ENCODE measurements at regions of chr11 and their contacts with region 1.

Region 1: DNA sequence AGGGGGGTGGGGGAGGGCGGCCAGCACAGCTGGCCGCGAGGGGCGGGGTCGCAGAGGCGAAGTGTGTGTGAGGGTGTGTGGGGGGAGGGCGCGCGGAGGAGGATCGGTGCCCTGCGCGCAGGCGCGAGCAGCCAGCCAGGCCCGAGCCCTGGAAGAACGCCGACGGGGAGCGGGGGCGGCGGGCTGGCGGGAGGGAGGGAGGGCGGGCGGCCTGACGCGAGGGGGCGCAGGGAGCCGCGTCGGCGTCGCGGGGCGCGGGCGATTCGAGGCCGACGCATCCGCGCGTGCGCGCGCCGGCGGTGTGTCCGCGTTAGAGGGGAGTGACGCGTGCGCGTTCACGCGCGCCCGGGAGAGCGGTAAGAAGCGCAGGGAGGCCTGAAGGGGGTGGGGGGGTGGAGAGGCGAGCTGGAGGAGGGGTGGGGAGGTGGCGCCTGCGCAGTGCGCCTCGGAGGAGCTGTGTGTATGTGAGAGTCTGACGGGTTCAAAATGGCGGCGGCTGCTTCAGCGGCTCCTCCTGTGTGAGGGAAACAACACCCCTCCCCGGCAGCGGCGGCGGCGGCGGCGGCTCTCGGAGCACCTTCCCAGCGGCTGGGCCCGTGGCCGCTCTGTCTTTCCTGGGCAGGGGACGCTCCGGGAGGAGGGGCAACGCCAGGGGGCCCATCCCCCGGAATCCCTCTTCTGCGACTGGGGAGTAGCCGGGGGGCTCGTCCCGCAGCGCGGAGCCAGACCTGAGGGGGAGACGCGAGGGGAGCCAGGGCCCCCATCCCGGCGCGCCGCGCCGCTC is at the start of gene KDM2A:
- DNase-seq: peak; percentile 84 to 100 (median 98)
- ATAC-seq: peak; percentile 77 to 82
- H3K4me3 Mint-ChIP-seq: peak within 1 kb of the TSS; percentile 91 to 99 (median 96)
- H3K27ac Mint-ChIP-seq: peak within 1 kb of the TSS; percentile 82 to 97 (median 96)
- H3K4me1 Mint-ChIP-seq: peaks cover 21 to 55% (median 40%) of the 10 kb centered on the region in 4 donors
- H3K27me3 Mint-ChIP-seq: no peaks in the 10 kb centered on the region
- polyA plus RNA-seq, gene KDM2A: 8.0 to 12.9 (median 9.9) TPM

Region 2: GRCh38 chr11:66649903-66650302 is 469.1 kb before region 1 on chr11:
- POLR2A ChIA-PET with region 1: no interaction called
- DNase-seq: no peak
- ATAC-seq: no peak
- H3K4me3 Mint-ChIP-seq: peak overlapping the region in 3 of 10 donors; percentile 15 to 36 (median 30)
- H3K27ac Mint-ChIP-seq: peak overlapping the region in 3 of 10 donors; percentile 48 to 78 (median 73)
- H3K4me1 Mint-ChIP-seq: peaks cover 30 to 78% (median 69%) of the 10 kb centered on the region in 4 donors
- H3K27me3 Mint-ChIP-seq: no peaks in the 10 kb centered on the region

Region 3: GRCh38 chr11:67102662-67103061 is 16.3 kb before region 1 on chr11:
- POLR2A ChIA-PET with region 1: interaction called, 72 read pairs
- DNase-seq: no peak
- ATAC-seq: no peak
- H3K4me3 Mint-ChIP-seq: peak overlapping the region in 1 of 10 donors; percentile 59
- H3K27ac Mint-ChIP-seq: peak overlapping the region in 7 of 10 donors; percentile 38 to 84 (median 67)
- H3K4me1 Mint-ChIP-seq: peaks cover 22 to 59% (median 30%) of the 10 kb centered on the region in 4 donors
- H3K27me3 Mint-ChIP-seq: no peaks in the 10 kb centered on the region